Heart left ventricle (tissue), 16 donors: ENCODE measurements at regions of chr1 and their contacts with region 1.

Region 1: DNA sequence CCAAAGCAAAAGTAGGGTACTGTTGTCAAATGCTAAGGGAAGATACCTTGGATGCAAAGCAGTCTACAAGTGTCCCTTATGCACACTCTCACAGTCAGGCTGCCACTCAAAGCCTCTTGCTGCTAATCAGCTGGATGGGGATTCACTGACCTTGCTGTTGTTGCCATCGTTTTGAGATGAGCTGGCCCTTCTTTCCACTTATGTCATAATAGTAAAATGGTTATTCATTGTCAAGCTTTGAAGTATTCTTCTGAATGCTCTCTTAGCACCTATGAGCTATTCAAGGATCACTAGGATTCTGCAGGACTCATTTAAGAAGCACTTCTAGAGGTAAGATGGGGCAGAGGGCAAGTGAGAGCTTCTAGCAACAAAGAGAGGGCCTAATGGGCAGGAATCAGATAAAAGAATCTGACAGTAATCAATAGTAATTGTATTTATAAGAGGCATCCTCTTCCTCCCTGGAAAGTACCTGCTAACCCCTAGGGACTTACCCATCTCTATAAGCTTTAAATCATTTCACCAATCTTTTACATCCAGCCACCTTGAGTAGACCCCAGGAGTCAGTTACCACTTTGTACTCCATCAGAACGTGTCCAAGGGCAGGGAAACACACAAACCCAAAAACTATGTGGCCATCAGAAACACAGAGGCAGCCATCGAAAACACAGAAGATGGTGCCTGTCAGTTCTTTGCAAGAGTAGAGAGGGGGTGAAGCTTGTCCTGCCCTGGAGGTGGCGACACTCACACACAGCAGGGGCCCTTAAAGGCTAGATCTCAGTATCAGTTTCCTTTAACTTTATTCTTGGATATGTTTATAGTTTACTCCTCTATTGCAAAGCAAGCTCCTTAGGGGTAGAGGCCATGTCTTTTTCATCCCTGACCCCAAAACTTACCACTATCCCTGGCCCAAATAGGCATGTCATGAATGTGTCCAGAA is 103.7 kb upstream of the NFIA start:
- DNase-seq: no peak
- ATAC-seq: peak in 3 of 4 donors; percentile 47 to 74 (median 54)
- H3K4me3 ChIP-seq: no peak overlapping the region
- H3K27ac ChIP-seq: no peak overlapping the region
- H3K4me1 ChIP-seq: peaks cover 0 to 12% (median 2%) of the 10 kb centered on the region in 12 donors
- H3K27me3 ChIP-seq: no peaks in the 10 kb centered on the region
- CTCF ChIP-seq: peak; percentile 36 to 64 (median 42)
- POLR2A ChIP-seq: no peak

Region 2: DNA sequence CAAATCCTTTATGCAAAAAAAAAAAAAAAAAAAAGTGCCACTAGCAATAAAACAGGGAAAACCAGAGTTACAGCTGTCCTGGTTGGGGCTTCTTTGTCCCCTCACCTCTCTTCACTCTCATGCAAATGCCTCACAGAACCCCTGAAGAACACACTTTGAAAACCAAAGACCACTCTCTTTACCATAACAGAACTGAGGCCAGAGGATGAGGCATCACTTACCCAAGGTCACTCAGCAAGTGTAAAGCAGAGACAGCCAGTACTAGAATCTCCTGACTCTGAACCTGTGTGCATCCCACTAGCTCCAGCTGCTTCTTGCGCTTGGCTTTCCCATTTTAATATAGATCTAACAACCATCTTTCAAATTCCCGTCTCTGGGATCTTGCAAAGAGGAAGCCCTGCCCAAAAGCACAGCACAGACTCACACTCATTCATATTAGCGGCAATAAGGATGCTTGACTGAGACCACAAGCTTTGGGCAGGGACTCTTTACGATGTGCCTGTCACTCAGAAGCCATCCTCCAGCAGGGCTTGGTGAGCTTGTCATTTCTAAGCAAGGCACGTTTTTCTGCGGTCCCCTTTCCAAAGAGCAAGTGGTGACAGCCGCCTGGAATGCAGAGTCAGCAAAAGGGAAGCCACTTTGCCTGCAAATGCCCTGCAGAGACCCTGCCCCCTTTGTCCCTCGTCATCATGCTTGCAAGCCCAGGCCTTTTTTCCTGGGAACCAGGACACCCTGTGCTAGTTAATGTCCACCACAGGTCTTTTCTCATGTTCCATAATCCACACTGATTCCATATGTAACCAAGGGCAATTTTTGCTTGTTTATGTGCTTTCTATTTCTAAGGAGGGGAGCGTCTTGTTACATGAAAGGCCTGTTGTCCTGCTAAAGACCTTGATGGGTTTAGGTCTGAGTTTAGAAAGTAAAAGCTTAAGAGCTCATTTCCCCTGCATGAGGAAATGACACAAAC is 27.2 kb after region 1 on chr1:
- intact Hi-C with region 1: no loop called
- DNase-seq: no peak
- ATAC-seq: no peak
- H3K4me3 ChIP-seq: no peak overlapping the region
- H3K27ac ChIP-seq: no peak overlapping the region
- H3K4me1 ChIP-seq: peaks cover 0 to 4% (median 0%) of the 10 kb centered on the region in 12 donors
- H3K27me3 ChIP-seq: no peaks in the 10 kb centered on the region
- CTCF ChIP-seq: no peak
- POLR2A ChIP-seq: no peak

Region 3: GRCh38 chr1:61170328-61171238 is 191.9 kb after region 1 on chr1:
- intact Hi-C with region 1: loop called in 1 of 10 experiments (anchors 10 kb)
- DNase-seq: no peak
- ATAC-seq: peak in 3 of 4 donors; percentile 34 to 59 (median 48)
- H3K4me3 ChIP-seq: no peak overlapping the region
- H3K27ac ChIP-seq: peak overlapping the region in 9 of 12 donors; percentile 14 to 68 (median 40)
- H3K4me1 ChIP-seq: peaks cover 12 to 83% (median 61%) of the 10 kb centered on the region in 12 donors
- H3K27me3 ChIP-seq: no peaks in the 10 kb centered on the region
- CTCF ChIP-seq: no peak
- POLR2A ChIP-seq: no peak

Region 4: DNA sequence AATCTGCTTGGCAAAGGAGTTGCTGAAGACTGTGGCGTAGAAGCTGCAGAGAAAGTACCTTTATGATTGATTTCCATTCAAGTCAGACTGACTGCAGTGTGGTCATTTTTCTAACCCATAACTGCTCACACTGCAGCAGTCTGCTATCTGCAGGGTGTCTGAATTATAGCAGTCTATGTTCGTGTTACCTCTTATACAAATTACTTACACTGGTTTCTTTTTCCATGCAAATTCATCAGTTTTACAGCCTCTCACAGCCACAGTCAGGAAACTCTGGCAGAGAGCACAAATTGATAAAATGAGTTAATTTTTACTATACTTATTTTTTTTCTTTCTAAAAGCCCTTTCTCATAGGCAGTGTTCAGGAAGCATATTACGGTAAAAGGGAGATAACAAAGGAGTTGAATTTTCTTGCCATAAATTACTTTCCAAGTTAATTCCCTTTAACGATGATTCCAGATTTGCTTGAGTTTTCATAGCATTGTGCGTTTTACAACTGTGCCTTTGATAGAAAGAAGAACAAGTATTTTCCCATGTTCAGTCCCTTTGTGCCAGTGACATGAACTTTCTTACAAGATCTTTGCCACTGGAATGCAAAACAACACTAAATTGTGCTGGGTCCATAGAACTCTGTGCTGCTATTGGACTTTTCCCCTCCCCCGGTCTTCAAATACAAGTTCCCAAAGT is 365.2 kb after region 1 on chr1:
- intact Hi-C with region 1: loop called in 3 of 10 experiments (anchors 10 kb)
- DNase-seq: no peak
- ATAC-seq: peak in 1 of 4 donors; percentile 14
- H3K4me3 ChIP-seq: no peak overlapping the region
- H3K27ac ChIP-seq: peak overlapping the region in 7 of 12 donors; percentile 10 to 44 (median 25)
- H3K4me1 ChIP-seq: peaks cover 0 to 44% (median 20%) of the 10 kb centered on the region in 12 donors
- H3K27me3 ChIP-seq: no peaks in the 10 kb centered on the region
- CTCF ChIP-seq: no peak
- POLR2A ChIP-seq: no peak

Region 5: DNA sequence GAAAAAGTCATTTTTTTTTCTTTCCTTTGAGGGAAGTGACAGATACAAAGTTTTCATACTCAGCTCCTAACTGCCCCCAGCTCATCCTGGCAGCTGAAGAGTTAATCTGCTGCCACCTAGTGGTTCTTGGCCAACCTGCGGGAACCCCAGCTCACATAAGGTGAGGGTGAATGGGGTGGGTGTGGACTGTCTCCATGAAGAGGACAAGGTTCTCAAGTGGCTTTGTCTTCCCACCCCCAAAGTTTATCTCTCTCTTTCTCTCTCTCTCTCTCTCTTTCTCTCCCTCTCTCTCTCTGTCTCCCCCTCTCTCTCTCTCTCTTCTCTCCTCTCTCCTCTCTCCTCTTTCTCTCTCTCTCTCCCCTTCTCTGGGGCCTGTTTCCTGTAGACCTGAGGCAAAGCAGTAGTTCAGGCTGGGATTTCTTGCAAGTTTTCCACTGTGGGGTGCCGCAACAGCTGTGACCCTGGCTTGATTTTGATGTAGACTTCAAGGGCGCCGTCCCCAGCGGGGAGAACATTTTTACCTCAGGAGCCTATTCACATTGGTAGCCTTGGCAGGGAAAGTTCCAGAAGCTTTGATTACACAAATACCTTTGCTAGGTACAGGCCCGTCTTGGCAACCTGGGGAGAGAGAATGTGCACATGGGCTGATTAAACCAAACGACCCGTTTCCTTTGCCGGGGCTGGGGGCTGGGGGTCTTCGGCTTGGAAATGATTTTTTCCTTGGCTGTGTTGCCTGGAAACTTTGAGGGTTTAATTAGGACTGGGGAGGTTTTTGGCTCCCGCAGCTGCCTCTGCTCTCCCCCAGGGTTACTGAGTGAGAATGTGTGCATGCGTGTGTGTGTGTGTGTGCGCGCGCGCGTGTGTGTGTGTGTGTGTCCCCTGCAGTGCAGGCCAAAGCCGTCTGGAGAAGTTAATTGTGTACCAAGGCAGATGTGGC is 610.3 kb after region 1 on chr1:
- intact Hi-C with region 1: loop called in 3 of 10 experiments (anchors 5 to 10 kb)
- DNase-seq: peak; percentile 29 to 64 (median 48)
- ATAC-seq: peak; percentile 56 to 85 (median 80)
- H3K4me3 ChIP-seq: no peak overlapping the region
- H3K27ac ChIP-seq: peak overlapping the region in 1 of 12 donors; percentile 24
- H3K4me1 ChIP-seq: peaks cover 0 to 6% (median 0%) of the 10 kb centered on the region in 12 donors
- H3K27me3 ChIP-seq: no peaks in the 10 kb centered on the region
- CTCF ChIP-seq: peak; percentile 56 to 77 (median 66)
- POLR2A ChIP-seq: no peak

Region 6: DNA sequence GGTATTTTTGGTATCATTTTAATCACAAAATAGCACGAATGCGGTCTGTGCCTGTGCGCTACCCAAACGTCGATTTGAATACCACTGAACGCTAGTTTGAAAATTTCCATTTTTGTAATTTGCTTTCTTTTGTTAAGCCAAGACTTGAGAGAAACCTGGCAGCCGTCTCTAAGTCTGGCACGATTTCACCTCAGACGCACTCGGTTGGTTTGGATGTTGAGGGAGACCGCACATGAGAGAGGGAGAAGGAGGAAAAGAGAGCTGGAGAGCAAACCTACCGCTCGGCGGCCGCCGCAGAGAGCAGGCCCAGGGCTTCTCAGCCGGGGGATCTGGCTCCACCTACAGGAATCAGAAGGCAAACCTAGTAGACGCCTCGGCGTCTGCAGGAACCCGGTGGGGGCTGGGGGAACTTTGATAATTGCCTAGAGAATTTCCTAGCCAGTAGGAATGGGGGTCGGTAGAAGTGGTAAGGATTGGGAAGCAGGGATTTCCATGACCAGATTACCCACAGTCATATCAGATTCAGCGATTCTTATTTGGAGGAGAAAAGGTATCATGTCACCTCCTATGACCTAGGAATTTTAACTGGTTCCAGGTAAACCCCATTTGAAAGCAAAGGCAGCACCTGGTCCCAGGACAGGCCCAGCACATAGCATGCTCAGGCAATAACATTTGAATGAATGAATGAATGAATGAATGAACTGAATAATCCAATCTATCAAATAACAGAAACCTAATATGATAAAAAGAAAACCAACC is 663.1 kb after region 1 on chr1:
- intact Hi-C with region 1: loop called in 4 of 10 experiments (anchors 5 to 10 kb)
- DNase-seq: peak; percentile 76 to 88 (median 78)
- ATAC-seq: peak; percentile 71 to 90 (median 86)
- H3K4me3 ChIP-seq: peak overlapping the region in 8 of 12 donors; percentile 3 to 50 (median 41)
- H3K27ac ChIP-seq: peak overlapping the region in 11 of 12 donors; percentile 45 to 88 (median 77)
- H3K4me1 ChIP-seq: peaks cover 0 to 41% (median 10%) of the 10 kb centered on the region in 12 donors
- H3K27me3 ChIP-seq: no peaks in the 10 kb centered on the region
- CTCF ChIP-seq: peak; percentile 62 to 89 (median 76)
- POLR2A ChIP-seq: no peak